ENCODE measurements at regions of chr4 and their contacts with region 1.

Region 1: DNA sequence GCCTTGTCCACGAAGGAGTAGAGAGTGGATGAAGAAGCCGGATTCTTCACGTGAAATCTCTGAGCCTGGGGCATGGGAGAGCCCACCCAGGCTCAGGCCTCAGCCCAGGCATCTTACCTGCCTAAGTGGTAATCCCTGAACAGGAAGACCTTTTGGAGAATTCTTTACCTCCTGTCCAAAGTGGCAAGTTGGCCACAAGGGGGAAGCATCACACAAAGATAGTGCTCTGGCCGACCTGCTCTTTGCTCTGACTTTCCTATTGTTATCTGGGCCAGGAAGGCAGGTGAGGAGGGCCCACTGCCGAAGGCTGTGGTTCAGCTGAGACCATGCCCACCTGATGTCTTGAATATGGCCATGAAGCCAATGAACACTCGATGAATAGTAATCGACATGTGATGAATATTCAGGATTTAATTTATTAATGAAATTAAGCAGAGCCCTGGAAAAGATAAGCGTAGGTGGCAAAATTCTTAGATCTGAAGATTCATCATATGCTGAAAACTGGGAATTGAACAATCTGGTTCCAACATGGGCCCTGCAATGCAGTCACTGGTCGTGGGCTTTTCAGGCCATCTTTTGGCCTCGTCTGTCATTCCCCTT is 93.8 kb downstream of the PDGFRA start:
- DNase-seq: peak; percentile 45 to 68
- H3K4me3 ChIP-seq: no peak overlapping the region
- H3K27ac ChIP-seq: no peak overlapping the region
- H3K4me1 ChIP-seq: no peaks in the 10 kb centered on the region
- H3K27me3 ChIP-seq: no peaks in the 10 kb centered on the region
- CTCF ChIP-seq: peak; percentile 60 to 66

Region 2: GRCh38 chr4:54840992-54841768 is 518.3 kb after region 1 on chr4:
- intact Hi-C with region 1: loop called (anchors 10 kb)
- DNase-seq: no peak
- H3K4me3 ChIP-seq: no peak overlapping the region
- H3K27ac ChIP-seq: no peak overlapping the region
- H3K4me1 ChIP-seq: peaks cover 0 to 16% (median 4%) of the 10 kb centered on the region in 4 donors
- H3K27me3 ChIP-seq: no peaks in the 10 kb centered on the region
- CTCF ChIP-seq: peak in 1 of 2 experiments; percentile 21

Region 3: DNA sequence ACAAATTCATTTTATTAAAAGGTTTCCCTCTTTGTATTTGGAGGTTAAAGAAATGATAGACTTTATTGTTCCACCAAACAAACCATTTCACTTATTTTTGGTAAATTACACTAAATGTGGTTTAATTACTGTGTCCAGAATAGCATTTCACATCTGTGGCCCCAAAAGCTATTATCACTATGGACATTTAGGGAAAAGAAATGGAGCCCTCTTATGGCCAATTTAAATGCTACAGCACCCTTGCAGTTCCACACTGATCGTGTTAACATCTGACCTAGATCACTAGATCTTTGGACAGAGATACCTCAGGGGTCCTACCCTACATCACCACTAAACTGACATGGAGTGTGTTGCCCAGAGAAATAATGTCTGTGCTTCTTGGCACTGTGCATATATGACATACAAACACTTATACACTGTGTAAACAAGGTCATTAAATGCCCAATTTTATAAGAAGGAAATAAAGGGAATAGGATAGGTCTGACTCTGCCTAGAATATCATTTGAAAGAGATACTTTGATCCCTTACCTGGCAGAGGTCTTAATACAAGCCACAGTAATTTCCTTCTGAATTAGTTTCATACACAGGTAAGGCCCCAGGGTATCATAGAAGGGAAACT is 638.5 kb after region 1 on chr4:
- intact Hi-C with region 1: loop called (anchors 10 kb)
- DNase-seq: no peak
- H3K4me3 ChIP-seq: no peak overlapping the region
- H3K27ac ChIP-seq: no peak overlapping the region
- H3K4me1 ChIP-seq: no peaks in the 10 kb centered on the region
- H3K27me3 ChIP-seq: no peaks in the 10 kb centered on the region
- CTCF ChIP-seq: peak; percentile 54 to 62